ENCODE measurements at regions of chr16 and their contacts with region 1.

Region 1: GRCh38 chr16:68704232-68704867 is 32.7 kb upstream of the CDH1 start:
- DNase-seq: peak; percentile 73 to 85
- H3K4me3 ChIP-seq: no peak overlapping the region
- H3K27ac ChIP-seq: no peak overlapping the region
- H3K4me1 ChIP-seq: peaks cover 31% of the 10 kb centered on the region
- H3K27me3 ChIP-seq: no peaks in the 10 kb centered on the region
- CTCF ChIP-seq: peak; percentile 86

Region 2: GRCh38 chr16:68590201-68590994 is 114.0 kb before region 1 on chr16:
- CTCF ChIA-PET with region 1: interaction called, 17 read pairs
- POLR2A ChIA-PET with region 1: no interaction called
- intact Hi-C with region 1: loop called (anchors 2 kb)
- DNase-seq: peak; percentile 46 to 79
- H3K4me3 ChIP-seq: no peak overlapping the region
- H3K27ac ChIP-seq: no peak overlapping the region
- H3K4me1 ChIP-seq: no peaks in the 10 kb centered on the region
- H3K27me3 ChIP-seq: no peaks in the 10 kb centered on the region
- CTCF ChIP-seq: peak; percentile 92

Region 3: GRCh38 chr16:68732036-68732680 is 27.8 kb after region 1 on chr16:
- CTCF ChIA-PET with region 1: no interaction called
- POLR2A ChIA-PET with region 1: interaction called, 9 read pairs
- intact Hi-C with region 1: loop called (anchors 1 kb)
- DNase-seq: peak; percentile 85 to 92
- H3K4me3 ChIP-seq: peak overlapping the region; percentile 22; the same call in 1 of the 2 replicates
- H3K27ac ChIP-seq: peak overlapping the region; percentile 67
- H3K4me1 ChIP-seq: peaks cover 22% of the 10 kb centered on the region
- H3K27me3 ChIP-seq: no peaks in the 10 kb centered on the region
- CTCF ChIP-seq: no peak

Region 4: DNA sequence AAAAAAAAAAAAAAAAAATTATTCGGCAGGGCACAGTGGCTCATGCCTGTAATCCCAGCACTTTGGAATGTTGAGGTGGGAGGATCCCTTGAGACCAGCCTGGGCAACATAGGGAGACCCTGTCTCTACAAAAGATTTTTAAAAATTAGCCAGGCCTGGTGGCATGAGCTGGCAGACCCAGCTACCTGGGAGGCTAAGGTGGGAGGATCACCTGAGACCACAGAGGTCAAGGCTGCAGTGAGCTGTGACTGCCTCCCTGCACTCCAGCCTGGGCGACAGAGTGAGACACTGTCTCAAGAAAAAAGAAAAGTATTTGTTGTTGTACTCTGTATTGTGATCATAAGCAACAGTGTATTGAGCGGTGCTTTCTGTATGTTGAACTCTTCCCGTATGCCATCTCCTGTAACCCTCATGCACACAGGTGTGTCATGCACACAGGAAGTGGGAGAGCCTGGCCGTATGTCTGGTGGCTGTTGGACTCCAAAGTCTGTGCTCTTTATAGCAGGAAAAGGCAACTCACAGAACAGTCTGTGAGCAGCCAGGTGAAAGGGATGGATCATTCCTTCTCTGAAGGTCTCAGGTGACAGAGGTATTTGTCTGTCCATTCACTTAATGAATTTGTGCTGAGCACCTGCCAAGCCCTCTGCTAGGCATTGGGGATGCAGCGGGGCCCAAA is 49.9 kb after region 1 on chr16:
- CTCF ChIA-PET with region 1: interaction called, 11 read pairs
- POLR2A ChIA-PET with region 1: no interaction called
- intact Hi-C with region 1: loop called (anchors 1 kb)
- DNase-seq: no peak
- H3K4me3 ChIP-seq: no peak overlapping the region
- H3K27ac ChIP-seq: peak overlapping the region; percentile 98
- H3K4me1 ChIP-seq: peaks cover 64% of the 10 kb centered on the region
- H3K27me3 ChIP-seq: no peaks in the 10 kb centered on the region
- CTCF ChIP-seq: no peak

Region 5: GRCh38 chr16:68790130-68790761 is 85.9 kb after region 1 on chr16:
- CTCF ChIA-PET with region 1: no interaction called
- POLR2A ChIA-PET with region 1: interaction called, 3 read pairs
- intact Hi-C with region 1: loop called (anchors 1 kb)
- DNase-seq: peak; percentile 80 to 97
- H3K4me3 ChIP-seq: peak overlapping the region; percentile 3; the same call in 1 of the 2 replicates
- H3K27ac ChIP-seq: peak overlapping the region; percentile 48
- H3K4me1 ChIP-seq: peaks cover 57% of the 10 kb centered on the region
- H3K27me3 ChIP-seq: no peaks in the 10 kb centered on the region
- CTCF ChIP-seq: no peak

Region 6: DNA sequence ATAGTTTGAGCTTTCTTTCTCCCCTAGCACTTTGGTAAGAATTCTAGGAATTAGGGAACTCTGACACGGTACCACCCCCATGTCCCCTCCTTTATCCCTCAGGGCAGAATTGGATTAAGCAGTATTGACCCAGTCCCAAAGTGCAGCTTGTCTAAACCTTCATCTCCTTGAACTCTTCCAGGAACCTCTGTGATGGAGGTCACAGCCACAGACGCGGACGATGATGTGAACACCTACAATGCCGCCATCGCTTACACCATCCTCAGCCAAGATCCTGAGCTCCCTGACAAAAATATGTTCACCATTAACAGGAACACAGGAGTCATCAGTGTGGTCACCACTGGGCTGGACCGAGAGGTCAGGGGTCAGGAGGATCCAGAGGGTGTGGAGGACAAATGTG is 107.2 kb after region 1 on chr16:
- CTCF ChIA-PET with region 1: interaction called, 14 read pairs
- POLR2A ChIA-PET with region 1: no interaction called
- intact Hi-C with region 1: no loop called
- DNase-seq: no peak
- H3K4me3 ChIP-seq: no peak overlapping the region
- H3K27ac ChIP-seq: no peak overlapping the region
- H3K4me1 ChIP-seq: no peaks in the 10 kb centered on the region
- H3K27me3 ChIP-seq: no peaks in the 10 kb centered on the region
- CTCF ChIP-seq: no peak

Region 7: DNA sequence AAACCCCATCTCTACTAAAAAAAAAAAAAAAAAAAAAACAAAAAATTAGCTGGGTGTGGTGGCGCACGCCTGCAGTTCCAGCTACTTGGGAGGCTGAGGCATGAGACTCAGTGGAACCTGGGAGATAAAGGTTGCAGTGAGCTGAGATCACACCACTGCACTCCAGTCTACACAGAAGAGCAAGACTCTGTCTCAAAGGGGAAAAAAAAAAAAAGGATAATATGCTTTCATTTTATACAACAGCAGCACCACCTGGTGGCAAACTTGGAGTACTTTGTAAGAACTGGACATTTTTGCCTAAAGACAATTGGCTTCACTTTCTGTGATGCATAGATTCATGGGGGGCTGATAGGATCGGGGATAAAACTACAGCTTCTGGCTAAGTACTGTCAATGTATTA is 419.6 kb after region 1 on chr16:
- CTCF ChIA-PET with region 1: no interaction called
- POLR2A ChIA-PET with region 1: no interaction called
- intact Hi-C with region 1: loop called (anchors 5 kb)
- DNase-seq: peak; percentile 47 to 62
- H3K4me3 ChIP-seq: no peak overlapping the region
- H3K27ac ChIP-seq: no peak overlapping the region
- H3K4me1 ChIP-seq: no peaks in the 10 kb centered on the region
- H3K27me3 ChIP-seq: no peaks in the 10 kb centered on the region
- CTCF ChIP-seq: peak; percentile 87